ENCODE measurements at regions of chr14 and their contacts with region 1.

Region 1: GRCh38 chr14:23665375-23666192 is 29.4 kb downstream of the DHRS2 start:
- DNase-seq: peak; percentile 15 to 57
- H3K4me3 ChIP-seq: no peak overlapping the region
- H3K27ac ChIP-seq: no peak overlapping the region
- H3K4me1 ChIP-seq: no peaks in the 10 kb centered on the region
- H3K27me3 ChIP-seq: no peaks in the 10 kb centered on the region
- CTCF ChIP-seq: peak; percentile 42 to 76 (median 76)
- EP300 ChIP-seq: no peak
- POLR2A ChIP-seq: no peak
- RAD21 ChIP-seq: peak; percentile 80 to 85

Region 2: GRCh38 chr14:23675906-23676305 is 10.3 kb after region 1 on chr14:
- CTCF ChIA-PET with region 1: interaction called, 25 read pairs
- POLR2A ChIA-PET with region 1: no interaction called
- DNase-seq: no peak
- H3K4me3 ChIP-seq: no peak overlapping the region
- H3K27ac ChIP-seq: no peak overlapping the region
- H3K4me1 ChIP-seq: no peaks in the 10 kb centered on the region
- H3K27me3 ChIP-seq: no peaks in the 10 kb centered on the region; a peak in 1 of 7 replicates
- CTCF ChIP-seq: no peak
- EP300 ChIP-seq: no peak
- POLR2A ChIP-seq: no peak
- RAD21 ChIP-seq: no peak

Region 3: DNA sequence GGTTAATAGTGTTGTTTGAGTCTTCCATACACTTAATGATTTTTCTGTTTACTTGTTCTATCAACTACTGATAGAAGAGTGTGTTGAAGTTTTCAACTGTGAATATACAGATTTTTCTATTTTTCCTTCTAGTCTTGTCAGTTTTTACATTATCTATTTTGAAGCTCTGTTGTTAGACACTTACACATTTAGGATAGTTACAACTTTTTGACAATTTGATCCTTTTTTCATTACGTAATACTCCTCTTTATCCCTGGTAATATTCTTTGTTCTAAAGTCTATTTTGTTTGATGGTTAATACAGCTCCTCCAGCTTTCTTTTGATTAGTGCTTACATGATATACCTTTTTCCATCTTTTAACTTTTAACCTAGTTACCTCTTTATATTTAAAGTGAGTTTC is 15.8 kb after region 1 on chr14:
- CTCF ChIA-PET with region 1: interaction called, 25 read pairs
- POLR2A ChIA-PET with region 1: no interaction called
- DNase-seq: no peak
- H3K4me3 ChIP-seq: no peak overlapping the region
- H3K27ac ChIP-seq: no peak overlapping the region
- H3K4me1 ChIP-seq: no peaks in the 10 kb centered on the region
- H3K27me3 ChIP-seq: no peaks in the 10 kb centered on the region
- CTCF ChIP-seq: no peak
- EP300 ChIP-seq: no peak
- POLR2A ChIP-seq: no peak
- RAD21 ChIP-seq: no peak

Region 4: GRCh38 chr14:23694085-23694975 is 28.7 kb after region 1 on chr14:
- CTCF ChIA-PET with region 1: interaction called, 13 read pairs
- POLR2A ChIA-PET with region 1: interaction called, 4 read pairs
- DNase-seq: peak in 1 of 2 experiments; percentile 52
- H3K4me3 ChIP-seq: peak overlapping the region in 2 of 4 experiments; percentile 19 to 51; a peak in 3 of 8 replicates
- H3K27ac ChIP-seq: no peak overlapping the region
- H3K4me1 ChIP-seq: peaks cover 11 to 18% (median 14%) of the 10 kb centered on the region in 4 experiments; a peak in 6 of 7 replicates
- H3K27me3 ChIP-seq: no peaks in the 10 kb centered on the region; a peak in 1 of 7 replicates
- CTCF ChIP-seq: no peak
- EP300 ChIP-seq: no peak
- POLR2A ChIP-seq: peak in 1 of 2 experiments; percentile 51; a peak in 1 of 3 replicates
- RAD21 ChIP-seq: no peak